Transverse colon (tissue), 4 donors: ENCODE measurements at regions of chr2 and their contacts with region 1.

Region 1: GRCh38 chr2:112481050-112481527 is 867 bp upstream of the TTL start:
- DNase-seq: peak; percentile 87
- H3K4me3 ChIP-seq: peak overlapping the region; percentile 62 to 83 (median 81)
- H3K27ac ChIP-seq: peak overlapping the region; percentile 89 to 97 (median 96)
- H3K4me1 ChIP-seq: peaks cover 7 to 20% (median 15%) of the 10 kb centered on the region in 4 donors
- H3K27me3 ChIP-seq: no peaks in the 10 kb centered on the region
- CTCF ChIP-seq: peak; percentile 73 to 81 (median 76)
- EP300 ChIP-seq: no peak
- POLR2A ChIP-seq: no peak

Region 2: DNA sequence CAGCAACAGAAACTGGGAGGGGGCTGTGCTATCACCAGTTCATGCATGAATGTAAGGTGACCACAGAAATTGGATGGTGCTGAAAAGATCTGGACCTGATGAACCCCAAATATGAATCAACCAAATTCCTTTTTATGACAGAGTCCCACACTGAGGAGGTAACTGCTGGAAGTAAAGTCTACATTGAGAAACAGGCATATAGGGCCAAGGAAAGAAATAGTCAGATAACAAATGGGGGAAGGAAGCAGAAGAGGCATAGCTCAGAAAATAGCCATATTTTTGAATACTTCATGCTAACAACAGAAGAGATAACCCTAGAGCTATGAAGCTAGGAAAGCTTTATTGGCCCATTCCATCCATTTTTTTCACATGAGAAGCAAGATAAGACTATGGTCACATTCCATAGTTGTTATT is 179.9 kb before region 1 on chr2:
- in situ Hi-C with region 1: no loop called
- intact Hi-C with region 1: no loop called
- DNase-seq: no peak
- H3K4me3 ChIP-seq: no peak overlapping the region
- H3K27ac ChIP-seq: no peak overlapping the region
- H3K4me1 ChIP-seq: no peaks in the 10 kb centered on the region
- H3K27me3 ChIP-seq: no peaks in the 10 kb centered on the region
- CTCF ChIP-seq: no peak
- EP300 ChIP-seq: no peak
- POLR2A ChIP-seq: no peak

Region 3: DNA sequence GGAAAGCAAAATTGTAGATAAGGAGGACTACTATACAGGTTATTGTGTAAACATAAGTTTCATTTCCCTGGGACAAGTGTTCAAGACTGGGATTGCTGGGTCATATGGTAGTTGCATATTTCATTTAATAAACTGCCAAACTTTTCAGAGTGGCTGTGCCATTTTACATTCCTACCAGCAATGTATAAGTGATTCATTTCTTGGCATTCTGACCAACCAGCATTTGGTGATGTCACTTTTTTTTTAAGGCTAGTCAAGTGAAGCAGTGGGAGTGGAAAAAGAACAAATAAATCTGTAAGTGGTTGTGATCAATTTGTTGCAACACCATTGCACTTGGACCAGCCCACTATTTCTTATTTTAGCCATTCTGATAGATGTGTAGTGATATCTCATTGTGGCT is 98.2 kb after region 1 on chr2:
- in situ Hi-C with region 1: loop called in 2 of 4 experiments (anchors 10 kb)
- intact Hi-C with region 1: no loop called
- DNase-seq: no peak
- H3K4me3 ChIP-seq: no peak overlapping the region
- H3K27ac ChIP-seq: no peak overlapping the region
- H3K4me1 ChIP-seq: peaks cover 0 to 11% (median 3%) of the 10 kb centered on the region in 4 donors
- H3K27me3 ChIP-seq: no peaks in the 10 kb centered on the region
- CTCF ChIP-seq: no peak
- EP300 ChIP-seq: no peak
- POLR2A ChIP-seq: no peak

Region 4: DNA sequence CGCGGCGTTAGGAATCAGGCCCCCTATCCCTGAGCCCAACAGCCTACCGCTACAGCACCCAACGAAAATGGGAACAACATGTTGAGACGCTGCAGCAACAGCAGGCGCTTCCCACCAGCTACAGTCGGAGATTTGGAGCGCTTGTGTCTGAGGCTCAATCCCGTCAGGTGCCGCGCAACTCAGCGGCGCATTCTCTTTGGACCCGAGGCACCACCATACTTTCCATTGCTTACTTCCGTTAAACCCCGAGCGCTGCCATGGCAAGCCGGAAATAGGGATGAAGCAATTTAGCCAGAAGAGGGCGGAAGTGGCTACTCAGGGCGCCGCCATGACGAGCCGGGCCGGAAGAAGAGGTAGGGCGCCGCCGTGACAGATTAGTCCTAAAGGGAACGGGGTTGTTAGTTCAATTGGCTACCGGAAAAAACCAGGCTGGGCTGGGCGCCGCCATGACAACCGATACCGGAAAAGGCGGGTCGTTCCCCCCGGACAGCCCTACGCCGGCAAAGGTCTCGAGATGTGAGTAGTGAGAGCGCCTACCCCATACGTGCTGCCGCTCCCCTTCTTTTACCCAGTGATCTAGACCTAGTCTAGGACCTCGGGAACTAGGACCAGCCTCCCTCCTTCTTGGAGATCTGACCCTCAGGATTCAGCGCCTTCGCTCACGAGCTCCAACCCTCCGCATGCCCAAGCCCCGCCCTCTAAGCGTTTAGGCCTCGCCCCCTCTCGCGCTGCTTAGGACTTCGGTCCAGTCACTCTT is 103.2 kb after region 1 on chr2 and contains the start of gene CHCHD5:
- in situ Hi-C with region 1: loop called in 2 of 4 experiments (anchors 10 kb)
- intact Hi-C with region 1: no loop called
- DNase-seq: peak; percentile 95
- H3K4me3 ChIP-seq: peak within 1 kb of the TSS; percentile 48 to 73 (median 56)
- H3K27ac ChIP-seq: peak within 1 kb of the TSS; percentile 87 to 97 (median 94)
- H3K4me1 ChIP-seq: peaks cover 6 to 22% (median 12%) of the 10 kb centered on the region in 4 donors
- H3K27me3 ChIP-seq: no peaks in the 10 kb centered on the region
- CTCF ChIP-seq: peak in 4 of 5 experiments; percentile 16 to 35 (median 28)
- EP300 ChIP-seq: no peak
- POLR2A ChIP-seq: peak; percentile 63
- total RNA-seq, gene CHCHD5: 11.1 to 23.0 (median 17.1) TPM

Region 5: DNA sequence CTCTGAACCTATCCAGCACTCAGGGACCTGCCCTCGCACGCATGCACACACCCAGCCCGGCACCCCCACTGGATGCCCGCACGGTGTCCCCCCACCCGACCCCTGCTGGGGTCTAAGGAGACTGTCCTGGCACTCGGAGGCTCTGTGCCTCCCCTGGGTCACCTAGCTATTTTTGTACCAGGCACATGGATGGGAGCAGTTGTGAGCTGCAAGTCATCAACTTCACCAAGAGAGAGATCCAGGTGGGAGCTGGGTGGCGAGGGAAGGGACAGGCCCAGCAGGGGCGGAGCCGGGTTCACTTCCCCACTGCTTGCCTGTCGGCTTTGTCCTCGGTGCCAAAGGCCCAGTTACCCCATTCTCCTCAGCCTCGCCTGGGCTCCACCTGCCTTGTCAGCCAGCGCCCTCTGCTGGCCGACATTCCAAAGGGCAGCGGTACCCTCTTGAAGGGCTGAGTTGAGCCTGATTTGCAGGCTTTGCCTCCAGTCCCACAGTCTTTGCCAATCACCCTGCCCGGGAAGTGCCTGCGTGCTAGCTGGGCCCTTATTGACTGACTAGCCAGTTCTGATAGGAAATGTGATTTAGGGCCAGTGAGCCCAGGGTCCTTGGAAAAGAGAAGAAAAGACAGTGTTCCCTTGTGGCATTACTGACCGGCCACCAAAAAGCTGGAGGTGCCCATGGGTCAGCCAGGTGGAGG is 245.6 kb after region 1 on chr2:
- in situ Hi-C with region 1: loop called in 1 of 4 experiments (anchors 25 kb)
- intact Hi-C with region 1: no loop called
- DNase-seq: peak; percentile 92
- H3K4me3 ChIP-seq: no peak overlapping the region
- H3K27ac ChIP-seq: no peak overlapping the region
- H3K4me1 ChIP-seq: peaks cover 0 to 3% (median 3%) of the 10 kb centered on the region in 4 donors
- H3K27me3 ChIP-seq: no peaks in the 10 kb centered on the region
- CTCF ChIP-seq: peak; percentile 94 to 97 (median 96)
- EP300 ChIP-seq: no peak
- POLR2A ChIP-seq: no peak

Region 6: GRCh38 chr2:113068718-113069435 is 587.8 kb after region 1 on chr2:
- in situ Hi-C with region 1: no loop called
- intact Hi-C with region 1: no loop called
- DNase-seq: no peak
- H3K4me3 ChIP-seq: no peak overlapping the region
- H3K27ac ChIP-seq: no peak overlapping the region
- H3K4me1 ChIP-seq: no peaks in the 10 kb centered on the region
- H3K27me3 ChIP-seq: no peaks in the 10 kb centered on the region
- CTCF ChIP-seq: no peak
- EP300 ChIP-seq: no peak
- POLR2A ChIP-seq: no peak